ENCODE measurements at regions of chr1 and their contacts with region 1.

Region 1: DNA sequence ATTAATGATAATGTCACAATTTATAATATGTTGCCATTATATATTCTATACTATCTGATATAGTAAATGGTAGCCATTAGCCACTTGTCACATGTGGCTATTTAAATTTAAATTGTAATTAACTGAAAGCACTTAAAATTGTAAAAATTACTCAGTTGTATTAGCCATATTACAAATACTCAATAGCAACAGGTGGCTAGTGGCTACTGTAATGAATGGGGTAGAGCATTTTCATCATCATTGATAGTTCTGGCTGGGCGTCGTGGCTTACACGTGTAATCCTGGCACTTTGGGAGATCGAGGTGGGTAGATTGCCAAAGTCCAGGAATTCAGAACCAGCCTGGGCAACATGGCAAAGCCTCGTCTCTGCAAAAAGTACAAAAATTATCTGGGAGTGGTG is 16.5 kb downstream of the ZBTB37 start:
- DNase-seq: no peak
- ATAC-seq: no peak
- H3K4me3 ChIP-seq: no peak overlapping the region
- H3K4me3 Mint-ChIP-seq: no peak overlapping the region
- H3K27ac ChIP-seq: no peak overlapping the region
- H3K27ac Mint-ChIP-seq: no peak overlapping the region
- H3K4me1 ChIP-seq: no peaks in the 10 kb centered on the region
- H3K4me1 Mint-ChIP-seq: no peaks in the 10 kb centered on the region
- H3K27me3 ChIP-seq: no peaks in the 10 kb centered on the region
- H3K27me3 Mint-ChIP-seq: no peaks in the 10 kb centered on the region
- CTCF ChIP-seq: no peak

Region 2: DNA sequence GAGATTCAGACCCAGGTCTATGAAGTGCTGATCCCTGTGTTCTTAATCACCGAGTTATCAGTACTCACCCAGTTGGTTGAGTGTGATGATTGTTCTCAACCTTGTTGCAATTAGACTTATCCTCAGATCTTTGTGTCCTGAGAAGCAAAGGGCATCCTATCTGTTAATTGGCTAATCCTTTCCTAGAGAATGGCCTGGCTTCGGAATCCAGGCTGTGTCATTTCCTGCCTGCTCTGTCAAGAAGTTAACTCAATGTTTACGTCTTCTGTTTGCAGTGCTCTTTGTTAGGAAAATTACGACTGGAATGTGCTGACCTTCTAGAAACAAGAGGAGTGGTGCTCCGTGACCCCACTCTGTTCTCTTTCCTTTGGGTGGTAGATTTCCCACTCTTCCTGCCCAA is 31.6 kb before region 1 on chr1:
- CTCF ChIA-PET with region 1: no interaction called
- POLR2A ChIA-PET with region 1: interaction called, 15 read pairs
- intact Hi-C with region 1: no loop called
- DNase-seq: no peak
- ATAC-seq: no peak
- H3K4me3 ChIP-seq: no peak overlapping the region
- H3K4me3 Mint-ChIP-seq: no peak overlapping the region
- H3K27ac ChIP-seq: no peak overlapping the region
- H3K27ac Mint-ChIP-seq: no peak overlapping the region
- H3K4me1 ChIP-seq: no peaks in the 10 kb centered on the region
- H3K4me1 Mint-ChIP-seq: no peaks in the 10 kb centered on the region
- H3K27me3 ChIP-seq: no peaks in the 10 kb centered on the region
- H3K27me3 Mint-ChIP-seq: no peaks in the 10 kb centered on the region
- CTCF ChIP-seq: no peak

Region 3: GRCh38 chr1:173903827-173904531 is 19.3 kb after region 1 on chr1:
- CTCF ChIA-PET with region 1: no interaction called
- POLR2A ChIA-PET with region 1: no interaction called
- intact Hi-C with region 1: no loop called
- DNase-seq: no peak
- ATAC-seq: no peak
- H3K4me3 ChIP-seq: no peak overlapping the region
- H3K4me3 Mint-ChIP-seq: no peak overlapping the region
- H3K27ac ChIP-seq: no peak overlapping the region
- H3K27ac Mint-ChIP-seq: no peak overlapping the region
- H3K4me1 ChIP-seq: no peaks in the 10 kb centered on the region
- H3K4me1 Mint-ChIP-seq: peaks cover 2% of the 10 kb centered on the region
- H3K27me3 ChIP-seq: no peaks in the 10 kb centered on the region
- H3K27me3 Mint-ChIP-seq: no peaks in the 10 kb centered on the region
- CTCF ChIP-seq: no peak

Region 4: GRCh38 chr1:175116903-175117302 is 1232.2 kb after region 1 on chr1:
- CTCF ChIA-PET with region 1: no interaction called
- POLR2A ChIA-PET with region 1: no interaction called
- intact Hi-C with region 1: no loop called
- DNase-seq: no peak
- ATAC-seq: no peak
- H3K4me3 ChIP-seq: no peak overlapping the region
- H3K4me3 Mint-ChIP-seq: no peak overlapping the region
- H3K27ac ChIP-seq: no peak overlapping the region
- H3K27ac Mint-ChIP-seq: no peak overlapping the region
- H3K4me1 ChIP-seq: no peaks in the 10 kb centered on the region
- H3K4me1 Mint-ChIP-seq: no peaks in the 10 kb centered on the region
- H3K27me3 ChIP-seq: peaks cover 0 to 8% (median 2%) of the 10 kb centered on the region in 4 experiments
- H3K27me3 Mint-ChIP-seq: peaks cover 31% of the 10 kb centered on the region
- CTCF ChIP-seq: no peak

Measured in B cell (primary cell).